Left ventricle myocardium inferior (tissue), 1 donor: ENCODE measurements at regions of chr3 and their contacts with region 1.

Region 1: GRCh38 chr3:50616003-50616769 is 765 bp upstream of the MAPKAPK3 start:
- DNase-seq: peak; percentile 76
- H3K4me3 ChIP-seq: peak overlapping the region; percentile 96
- H3K27ac ChIP-seq: peak overlapping the region; percentile 98
- H3K4me1 ChIP-seq: peaks cover 75% of the 10 kb centered on the region
- H3K27me3 ChIP-seq: no peaks in the 10 kb centered on the region
- CTCF ChIP-seq: peak; percentile 100

Region 2: DNA sequence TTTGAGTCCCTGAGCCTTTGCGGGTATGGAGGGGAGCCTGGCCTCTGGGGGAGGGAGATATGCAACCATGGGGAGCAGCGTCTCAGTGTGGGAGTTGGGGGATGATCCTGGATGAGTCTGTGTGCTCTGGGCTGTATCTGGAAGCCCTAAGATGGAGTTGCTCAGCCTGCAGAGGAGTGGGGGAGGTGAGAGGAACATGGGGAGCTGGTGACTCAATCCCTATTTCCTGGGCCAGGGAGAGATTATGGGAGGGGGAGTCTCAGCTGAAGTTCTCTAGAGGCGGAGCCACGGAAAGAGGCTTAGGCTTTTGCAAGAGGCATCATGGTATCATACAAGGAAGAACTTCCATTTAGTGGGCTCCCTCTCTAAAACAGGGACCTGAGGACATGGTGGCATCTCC is 197.3 kb before region 1 on chr3:
- intact Hi-C with region 1: no loop called
- DNase-seq: no peak
- H3K4me3 ChIP-seq: no peak overlapping the region
- H3K27ac ChIP-seq: no peak overlapping the region
- H3K4me1 ChIP-seq: no peaks in the 10 kb centered on the region
- H3K27me3 ChIP-seq: no peaks in the 10 kb centered on the region
- CTCF ChIP-seq: no peak

Region 3: DNA sequence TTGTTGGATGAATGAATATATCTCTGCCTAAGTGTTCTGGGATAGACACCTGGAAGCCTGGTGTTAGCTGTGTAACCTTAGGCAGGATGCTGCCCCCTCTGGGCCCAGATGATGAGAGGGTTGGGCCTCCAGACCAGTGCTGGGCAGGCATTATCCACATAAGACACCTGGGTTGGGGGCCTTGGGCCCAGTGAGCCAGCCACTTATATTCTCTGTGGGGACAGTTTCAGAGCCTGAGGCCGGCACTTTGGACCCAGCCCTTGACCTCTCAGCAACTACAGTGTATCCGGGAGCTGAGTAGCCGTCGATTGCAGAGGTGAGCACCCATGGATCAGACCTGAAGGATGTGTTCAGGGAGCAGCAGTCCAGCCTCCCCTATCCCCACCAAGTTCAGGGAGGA is 44.7 kb before region 1 on chr3:
- intact Hi-C with region 1: loop called (anchors 2 kb)
- DNase-seq: no peak
- H3K4me3 ChIP-seq: no peak overlapping the region
- H3K27ac ChIP-seq: peak overlapping the region; percentile 75
- H3K4me1 ChIP-seq: peaks cover 59% of the 10 kb centered on the region
- H3K27me3 ChIP-seq: no peaks in the 10 kb centered on the region
- CTCF ChIP-seq: no peak

Region 4: GRCh38 chr3:50817756-50818540 is 201.8 kb after region 1 on chr3:
- intact Hi-C with region 1: no loop called
- DNase-seq: no peak
- H3K4me3 ChIP-seq: no peak overlapping the region
- H3K27ac ChIP-seq: no peak overlapping the region
- H3K4me1 ChIP-seq: no peaks in the 10 kb centered on the region
- H3K27me3 ChIP-seq: no peaks in the 10 kb centered on the region
- CTCF ChIP-seq: no peak